ENCODE measurements at regions of chr1 and their contacts with region 1.

Region 1: GRCh38 chr1:230642263-230642959 is at the start of gene COG2:
- DNase-seq: peak; percentile 97
- CTCF ChIP-seq: peak; percentile 100

Region 2: DNA sequence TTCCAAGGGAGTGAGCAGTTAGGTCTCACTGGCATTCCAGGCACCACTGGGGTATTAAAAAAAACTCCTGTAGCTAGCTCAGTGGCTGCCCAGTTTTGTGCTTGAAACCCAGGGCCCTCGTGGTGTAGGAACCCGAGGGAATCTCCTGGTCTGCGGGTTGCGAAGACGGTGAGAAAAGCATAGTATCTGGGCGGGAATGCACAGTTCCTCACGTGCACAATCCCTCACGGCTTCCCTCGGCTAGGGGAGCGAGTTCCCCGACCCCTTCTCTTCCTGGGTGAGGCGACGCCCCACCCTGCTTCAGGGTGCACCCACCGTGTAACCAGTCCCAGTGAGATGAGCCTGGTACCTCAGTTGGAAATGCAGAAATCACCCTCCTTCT is 165.8 kb before region 1 on chr1:
- CTCF ChIA-PET with region 1: no interaction called
- POLR2A ChIA-PET with region 1: no interaction called
- DNase-seq: no peak
- CTCF ChIP-seq: no peak

Region 3: GRCh38 chr1:230611541-230612212 is 30.7 kb before region 1 on chr1:
- CTCF ChIA-PET with region 1: interaction called, 11 read pairs
- POLR2A ChIA-PET with region 1: no interaction called
- DNase-seq: no peak
- CTCF ChIP-seq: no peak

Region 4: DNA sequence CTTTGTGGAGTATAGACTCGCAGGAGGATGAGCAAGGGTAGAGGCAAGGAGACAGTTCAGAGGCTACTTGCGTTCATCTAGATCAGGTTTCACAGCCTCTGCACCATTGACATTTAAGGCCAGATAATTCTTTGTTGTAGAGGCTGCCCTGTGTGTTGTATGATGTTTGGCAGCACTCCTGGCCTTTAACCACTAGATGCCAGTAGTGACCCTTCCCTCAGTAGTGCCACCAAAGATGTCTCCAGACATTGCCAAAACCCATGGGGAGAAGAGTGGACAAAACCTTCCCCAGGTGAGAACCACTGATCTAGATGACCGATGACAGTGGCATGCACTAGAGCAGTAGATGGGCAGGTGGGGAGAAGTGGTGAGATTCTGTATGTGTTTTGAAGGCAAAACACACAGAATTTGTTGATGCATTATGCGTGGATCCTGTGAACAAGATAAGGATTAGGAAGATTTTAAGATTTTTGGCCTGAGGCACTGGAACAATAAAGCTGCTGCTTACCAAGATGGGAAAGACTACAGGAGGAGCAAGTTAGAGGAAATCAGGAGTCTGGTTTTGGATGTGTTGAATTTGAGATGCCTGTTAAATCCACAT is 10.0 kb before region 1 on chr1:
- CTCF ChIA-PET with region 1: interaction called, 17 read pairs
- POLR2A ChIA-PET with region 1: no interaction called
- DNase-seq: no peak
- CTCF ChIP-seq: peak; percentile 56

Region 5: DNA sequence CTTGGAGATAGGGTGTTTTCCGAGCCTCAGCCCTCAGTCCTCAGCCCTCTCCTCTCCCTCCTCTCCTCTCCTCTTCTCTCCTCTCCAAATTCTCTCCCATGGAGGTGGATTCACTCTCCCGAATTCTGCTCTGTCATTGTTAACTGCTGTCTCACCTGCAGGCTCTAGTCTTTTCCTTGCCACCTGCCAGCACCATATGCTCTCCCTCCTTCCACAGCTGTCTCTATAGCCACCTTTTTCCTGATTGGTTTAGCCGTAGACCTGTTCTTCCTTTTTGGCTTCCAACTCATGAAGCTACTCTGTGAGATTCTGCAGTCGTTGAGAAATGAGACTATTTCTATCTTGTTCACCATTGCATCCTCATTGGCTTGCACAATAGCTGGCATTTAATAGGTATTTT is 19.6 kb after region 1 on chr1:
- CTCF ChIA-PET with region 1: interaction called, 22 read pairs
- POLR2A ChIA-PET with region 1: no interaction called
- DNase-seq: no peak
- CTCF ChIP-seq: no peak

Region 6: GRCh38 chr1:230669543-230669942 is 27.1 kb after region 1 on chr1:
- CTCF ChIA-PET with region 1: interaction called, 22 read pairs
- POLR2A ChIA-PET with region 1: no interaction called
- DNase-seq: no peak
- CTCF ChIP-seq: no peak

Region 7: DNA sequence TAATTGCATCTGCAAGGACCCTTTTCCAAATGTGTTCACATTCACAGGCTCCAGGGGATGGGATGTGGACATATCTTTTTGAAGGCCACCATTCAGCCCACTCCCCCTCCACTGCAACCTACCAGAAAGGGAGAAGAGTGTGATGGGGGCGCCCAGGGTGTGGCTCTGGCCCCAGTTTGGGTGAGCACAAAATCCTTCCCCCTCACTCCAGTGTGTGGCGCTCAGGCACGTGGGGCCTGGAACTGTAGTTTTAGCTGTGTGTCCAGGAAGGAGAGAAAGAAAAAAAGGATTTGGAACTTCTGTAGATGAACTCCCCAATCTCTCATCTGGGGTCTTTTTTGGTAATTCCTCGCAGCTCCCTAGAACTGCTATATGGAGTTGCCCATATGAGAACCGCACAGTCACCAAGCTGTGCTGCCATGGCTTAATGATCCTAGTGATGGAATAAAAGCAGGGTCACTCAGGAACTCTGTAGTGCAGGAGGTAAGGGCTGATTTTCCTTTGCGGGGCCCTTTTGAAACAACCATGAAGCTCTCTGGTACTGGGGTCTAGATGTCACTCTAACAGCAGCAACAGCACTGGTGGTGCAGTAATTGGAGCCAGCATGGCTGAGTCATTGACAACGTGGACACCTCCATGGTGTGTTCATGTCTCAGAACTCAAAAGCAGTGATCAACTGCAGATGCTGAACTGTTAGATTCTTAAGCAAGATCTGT is 54.5 kb after region 1 on chr1:
- CTCF ChIA-PET with region 1: no interaction called
- POLR2A ChIA-PET with region 1: no interaction called
- DNase-seq: no peak
- CTCF ChIP-seq: no peak

Region 8: GRCh38 chr1:230713915-230714764 is 71.7 kb after region 1 on chr1 and contains the start of gene AGT:
- CTCF ChIA-PET with region 1: no interaction called
- POLR2A ChIA-PET with region 1: no interaction called
- DNase-seq: no peak
- CTCF ChIP-seq: no peak

Region 9: GRCh38 chr1:230766318-230766717 is 123.9 kb after region 1 on chr1:
- CTCF ChIA-PET with region 1: no interaction called
- POLR2A ChIA-PET with region 1: no interaction called
- DNase-seq: no peak
- CTCF ChIP-seq: no peak

Region 10: GRCh38 chr1:231211005-231211857 is 568.8 kb after region 1 on chr1:
- CTCF ChIA-PET with region 1: interaction called, 16 read pairs
- POLR2A ChIA-PET with region 1: no interaction called
- DNase-seq: peak; percentile 92
- CTCF ChIP-seq: peak; percentile 89